ENCODE measurements at regions of chr11 and their contacts with region 1.

Region 1: GRCh38 chr11:132920451-132921096 is 611.7 kb downstream of the OPCML start:
- DNase-seq: no peak
- ATAC-seq: no peak
- H3K4me3 ChIP-seq: no peak overlapping the region
- H3K27ac ChIP-seq: no peak overlapping the region
- H3K4me1 ChIP-seq: no peaks in the 10 kb centered on the region
- H3K27me3 ChIP-seq: no peaks in the 10 kb centered on the region
- CTCF ChIP-seq: no peak

Region 2: DNA sequence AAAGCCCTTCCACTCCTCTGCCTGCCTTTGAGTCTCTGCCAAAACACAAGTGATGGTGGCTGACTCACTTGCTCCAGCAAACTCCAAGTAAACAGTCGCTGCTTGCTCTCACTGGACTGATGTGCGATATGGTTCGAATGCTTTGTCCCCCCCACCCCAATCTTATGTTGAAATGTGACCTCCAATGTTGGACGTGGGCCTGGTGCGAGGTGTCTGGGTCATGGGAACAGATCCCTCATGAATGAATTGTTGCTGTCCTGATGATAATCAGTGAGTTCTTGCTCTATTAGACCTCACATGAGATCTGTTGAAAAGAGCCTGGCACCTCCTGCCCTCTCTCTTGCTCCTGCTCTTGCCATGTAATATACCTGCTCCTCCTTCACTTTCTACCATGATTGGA is 136.1 kb before region 1 on chr11:
- CTCF ChIA-PET with region 1: no interaction called
- POLR2A ChIA-PET with region 1: no interaction called
- in situ Hi-C with region 1: no loop called
- intact Hi-C with region 1: no loop called
- DNase-seq: no peak
- ATAC-seq: no peak
- H3K4me3 ChIP-seq: no peak overlapping the region
- H3K27ac ChIP-seq: no peak overlapping the region
- H3K4me1 ChIP-seq: no peaks in the 10 kb centered on the region
- H3K27me3 ChIP-seq: no peaks in the 10 kb centered on the region
- CTCF ChIP-seq: no peak

Region 3: DNA sequence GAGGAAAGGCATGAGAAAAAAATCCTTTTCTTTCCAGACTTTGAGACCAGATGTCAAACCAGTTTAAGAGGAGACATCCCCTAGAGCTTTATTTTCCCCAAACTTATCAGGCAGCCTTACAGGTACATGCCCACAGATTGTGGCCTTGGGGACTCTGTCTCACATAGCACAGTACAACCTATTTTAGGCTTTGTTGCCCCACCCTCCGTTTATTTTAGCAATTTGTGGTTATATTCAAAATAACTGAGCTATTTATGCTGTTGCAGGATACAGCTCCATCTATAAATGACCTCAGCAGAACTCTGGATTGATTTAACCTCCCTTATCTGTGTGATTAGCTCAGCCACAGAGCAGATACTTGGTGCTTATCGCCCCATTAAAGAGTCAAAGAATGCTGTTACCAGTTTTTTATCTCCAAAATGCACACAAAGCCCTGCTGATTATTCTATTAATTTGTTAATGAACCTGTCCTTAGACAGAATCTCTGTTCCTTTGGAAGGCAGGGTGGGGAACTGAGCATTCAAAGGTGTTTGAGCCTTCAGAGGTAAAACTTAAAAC is 86.5 kb after region 1 on chr11:
- CTCF ChIA-PET with region 1: no interaction called
- POLR2A ChIA-PET with region 1: interaction called, 10 read pairs
- in situ Hi-C with region 1: no loop called
- intact Hi-C with region 1: no loop called
- DNase-seq: no peak
- ATAC-seq: no peak
- H3K4me3 ChIP-seq: no peak overlapping the region
- H3K27ac ChIP-seq: no peak overlapping the region
- H3K4me1 ChIP-seq: no peaks in the 10 kb centered on the region
- H3K27me3 ChIP-seq: 0 out of 2 replicates have a peak, but pooled peaks cover under 1% of the 10 kb centered on the region
- CTCF ChIP-seq: no peak